Posterior vena cava (tissue), 2 donors: ENCODE measurements at regions of chr17 and their contacts with region 1.

Region 1: DNA sequence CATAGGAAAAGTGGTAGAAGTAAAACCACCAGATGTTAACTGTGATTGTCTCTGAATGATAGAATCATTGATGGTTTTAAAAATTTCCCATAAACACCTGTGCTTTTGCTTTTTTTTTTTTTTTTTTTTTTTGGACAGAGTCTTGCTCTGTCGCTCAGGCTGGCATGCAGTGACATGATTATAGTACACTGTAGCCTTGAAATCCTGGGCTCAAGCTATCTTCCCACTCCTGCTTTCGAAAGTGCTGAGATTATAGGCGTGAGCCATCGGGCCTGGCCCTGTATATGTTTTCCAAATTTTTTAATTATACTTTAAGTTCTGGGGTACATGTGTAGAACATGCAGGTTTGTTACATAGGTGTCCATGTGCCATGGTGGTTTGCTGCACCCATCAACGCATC is 80.5 kb downstream of the NF1 start:
- DNase-seq: no peak

Region 2: GRCh38 chr17:31130286-31131224 is 44.7 kb before region 1 on chr17:
- intact Hi-C with region 1: no loop called
- DNase-seq: no peak

Region 3: DNA sequence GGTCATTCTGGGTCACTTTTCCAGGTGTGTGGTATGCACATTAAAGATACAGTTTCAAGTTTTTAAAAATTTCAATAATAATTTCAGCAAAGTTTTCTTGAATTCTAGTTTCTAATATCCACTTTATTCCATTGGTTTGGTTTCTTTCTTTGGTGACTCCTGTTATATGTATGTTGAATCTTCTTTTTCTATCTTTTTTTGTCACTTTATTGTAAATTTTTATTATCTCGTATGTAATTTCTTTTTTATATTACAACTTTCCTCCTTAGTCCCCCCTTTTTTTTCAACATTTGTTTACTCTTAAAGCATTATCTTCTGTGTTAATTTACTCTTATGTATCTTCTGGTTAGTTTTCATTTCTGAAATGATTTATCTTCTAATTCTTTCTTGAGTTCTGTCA is 23.0 kb before region 1 on chr17:
- intact Hi-C with region 1: loop called in 1 of 2 experiments (anchors 2 kb)
- DNase-seq: no peak

Region 4: GRCh38 chr17:31373150-31374093 is 198.2 kb after region 1 on chr17:
- intact Hi-C with region 1: no loop called
- DNase-seq: no peak